ENCODE measurements at regions of chr11 and their contacts with region 1.

Region 1: DNA sequence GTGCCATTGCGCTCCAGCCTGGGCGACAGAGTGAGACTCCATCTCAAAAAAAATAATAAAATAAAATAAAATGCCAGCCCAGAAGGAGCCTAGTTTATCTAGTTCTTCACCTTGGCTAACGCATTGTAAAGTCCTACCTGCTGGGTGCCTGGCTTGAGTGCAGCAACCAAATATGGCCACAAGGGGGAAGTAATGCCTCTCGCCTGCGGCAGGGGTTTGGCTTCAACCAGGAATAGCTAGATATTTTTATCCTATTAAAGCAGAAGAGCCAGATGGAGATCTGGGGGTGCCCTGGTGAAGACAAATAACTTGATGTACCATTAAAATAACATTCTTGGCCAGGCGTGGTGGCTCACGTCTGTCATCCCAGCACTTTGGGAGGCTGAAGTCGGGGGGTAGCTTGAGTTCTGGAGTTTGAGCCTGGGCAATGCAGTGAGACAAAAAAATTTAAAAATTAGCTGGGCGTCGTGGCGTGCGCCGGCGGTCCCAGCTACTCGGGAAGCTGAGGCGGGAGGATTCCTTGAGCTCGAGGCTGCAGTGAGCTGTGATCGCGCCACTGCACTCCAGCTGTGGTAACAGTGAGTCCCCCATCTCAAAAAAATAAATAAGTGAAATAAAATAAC is 20.6 kb upstream of the PLEKHB1 start:
- H3K4me3 ChIP-seq: no peak overlapping the region
- H3K27ac ChIP-seq: no peak overlapping the region
- H3K4me1 ChIP-seq: no peaks in the 10 kb centered on the region
- CTCF ChIP-seq: peak; percentile 54; the same call in 1 of the 2 replicates

Region 2: DNA sequence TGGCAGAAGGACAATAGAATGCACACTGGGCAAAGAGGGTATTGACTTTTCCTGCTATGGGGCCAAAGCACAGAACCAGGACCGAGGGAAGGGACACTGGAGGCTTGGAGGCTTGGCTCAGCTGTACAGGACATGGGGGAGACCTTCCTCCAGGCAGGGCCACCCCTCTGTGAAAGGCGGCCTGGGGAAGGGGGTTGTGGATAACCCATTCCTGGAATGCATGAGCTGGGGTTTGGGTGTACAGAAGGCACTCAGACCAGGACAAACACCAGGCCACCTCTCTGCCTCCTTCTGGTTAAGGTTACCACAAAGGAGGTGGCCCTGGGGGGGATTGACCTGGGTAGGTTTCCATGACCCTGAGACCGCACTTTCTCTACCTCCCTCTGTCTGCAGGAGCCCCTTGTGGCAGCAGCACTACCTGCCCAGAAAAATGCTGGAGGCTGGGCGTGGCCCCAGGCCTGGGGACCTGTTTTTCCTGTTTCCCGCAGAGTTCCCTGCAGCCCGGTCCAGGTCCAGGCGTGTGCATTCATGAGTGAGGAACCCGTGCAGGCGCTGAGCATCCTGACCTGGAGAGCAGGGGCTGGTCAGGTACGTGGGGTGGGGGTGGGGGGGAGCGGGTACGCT is 398.1 kb before region 1 on chr11:
- CTCF ChIA-PET with region 1: no interaction called
- POLR2A ChIA-PET with region 1: no interaction called
- H3K4me3 ChIP-seq: no peak overlapping the region
- H3K27ac ChIP-seq: no peak overlapping the region
- H3K4me1 ChIP-seq: no peaks in the 10 kb centered on the region
- CTCF ChIP-seq: no peak

Region 3: GRCh38 chr11:73542175-73542574 is 83.6 kb before region 1 on chr11:
- CTCF ChIA-PET with region 1: no interaction called
- POLR2A ChIA-PET with region 1: no interaction called
- H3K4me3 ChIP-seq: no peak overlapping the region
- H3K27ac ChIP-seq: no peak overlapping the region
- H3K4me1 ChIP-seq: no peaks in the 10 kb centered on the region
- CTCF ChIP-seq: no peak

Region 4: DNA sequence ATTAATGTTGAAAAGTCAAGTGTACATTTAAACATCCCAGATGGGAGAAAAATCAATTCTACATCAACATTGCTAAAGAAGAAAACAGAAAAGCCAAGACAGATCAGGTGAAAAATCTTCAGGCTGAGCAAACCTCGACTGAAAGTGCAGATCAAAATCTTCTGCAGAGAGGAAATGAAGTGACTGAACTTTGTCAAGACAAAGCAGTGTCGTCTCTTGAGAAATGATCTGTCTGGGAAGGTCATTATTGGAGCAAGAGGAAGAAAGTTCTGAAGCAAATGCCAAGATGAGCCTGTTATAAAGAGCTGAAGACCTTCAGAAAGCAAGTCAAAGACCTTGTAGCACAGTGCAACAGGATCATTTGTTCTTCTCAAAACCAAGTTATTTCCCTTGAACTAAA is 14.8 kb after region 1 on chr11:
- CTCF ChIA-PET with region 1: interaction called, 22 read pairs
- POLR2A ChIA-PET with region 1: no interaction called
- H3K4me3 ChIP-seq: no peak overlapping the region
- H3K27ac ChIP-seq: no peak overlapping the region
- H3K4me1 ChIP-seq: no peaks in the 10 kb centered on the region
- CTCF ChIP-seq: no peak

Region 5: GRCh38 chr11:73647459-73648100 is 21.8 kb after region 1 on chr11:
- CTCF ChIA-PET with region 1: interaction called, 18 read pairs
- POLR2A ChIA-PET with region 1: interaction called, 4 read pairs
- H3K4me3 ChIP-seq: peak overlapping the region; percentile 27
- H3K27ac ChIP-seq: no peak overlapping the region
- H3K4me1 ChIP-seq: no peaks in the 10 kb centered on the region
- CTCF ChIP-seq: no peak